ENCODE measurements at regions of chr10 and their contacts with region 1.

Region 1: DNA sequence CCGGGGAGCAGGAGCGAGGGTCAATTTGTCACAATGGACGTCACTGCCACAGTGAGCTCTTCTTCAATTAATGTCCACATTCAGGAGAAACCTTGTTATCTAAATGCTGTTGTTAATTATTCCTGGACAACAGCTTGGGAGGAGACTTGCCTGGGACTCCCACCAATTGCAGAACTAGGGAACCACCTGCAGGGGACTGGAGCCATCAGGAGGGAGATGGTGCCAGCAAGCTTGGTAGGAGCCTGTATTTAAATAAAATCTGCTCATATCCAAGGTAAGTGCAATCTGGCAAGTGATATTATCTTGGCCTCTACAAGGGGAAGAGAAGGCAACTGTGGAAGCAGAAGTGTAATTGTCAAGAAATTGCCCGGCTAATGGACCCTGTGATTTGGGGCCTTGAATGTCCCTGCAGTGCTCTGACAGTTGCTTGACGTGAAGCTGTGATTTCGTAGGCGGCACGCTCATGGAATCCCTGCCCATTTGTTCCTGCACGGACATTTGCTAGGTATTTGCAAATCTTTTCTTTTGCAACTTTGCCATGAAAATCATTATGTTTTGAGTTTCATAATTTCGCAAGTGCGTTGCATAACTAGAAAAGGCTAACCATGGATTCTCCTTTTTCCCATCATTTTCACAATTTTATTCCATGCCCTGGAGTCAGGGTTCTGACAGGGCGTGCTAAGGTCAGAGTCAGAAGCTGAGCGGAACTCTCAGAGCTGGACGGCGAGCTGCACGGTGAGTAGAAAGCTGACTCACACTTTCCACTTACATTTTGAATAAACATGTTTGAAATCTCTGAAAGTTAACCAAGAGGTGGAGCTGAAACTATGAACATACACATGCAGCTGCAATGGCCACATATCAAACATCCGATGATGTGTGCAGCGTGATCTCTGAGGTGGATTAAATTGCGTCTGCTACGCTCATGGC is 84.9 kb upstream of the TCERG1L start:
- DNase-seq: peak; percentile 44 to 78 (median 64)
- H3K4me3 ChIP-seq: no peak overlapping the region
- H3K27ac ChIP-seq: peak overlapping the region in 1 of 2 donors; percentile 27
- H3K4me1 ChIP-seq: peaks cover 3% of the 10 kb centered on the region
- H3K27me3 ChIP-seq: no peaks in the 10 kb centered on the region
- CTCF ChIP-seq: peak in 1 of 3 donors; percentile 12
- EP300 ChIP-seq: no peak
- POLR2A ChIP-seq: no peak

Region 2: DNA sequence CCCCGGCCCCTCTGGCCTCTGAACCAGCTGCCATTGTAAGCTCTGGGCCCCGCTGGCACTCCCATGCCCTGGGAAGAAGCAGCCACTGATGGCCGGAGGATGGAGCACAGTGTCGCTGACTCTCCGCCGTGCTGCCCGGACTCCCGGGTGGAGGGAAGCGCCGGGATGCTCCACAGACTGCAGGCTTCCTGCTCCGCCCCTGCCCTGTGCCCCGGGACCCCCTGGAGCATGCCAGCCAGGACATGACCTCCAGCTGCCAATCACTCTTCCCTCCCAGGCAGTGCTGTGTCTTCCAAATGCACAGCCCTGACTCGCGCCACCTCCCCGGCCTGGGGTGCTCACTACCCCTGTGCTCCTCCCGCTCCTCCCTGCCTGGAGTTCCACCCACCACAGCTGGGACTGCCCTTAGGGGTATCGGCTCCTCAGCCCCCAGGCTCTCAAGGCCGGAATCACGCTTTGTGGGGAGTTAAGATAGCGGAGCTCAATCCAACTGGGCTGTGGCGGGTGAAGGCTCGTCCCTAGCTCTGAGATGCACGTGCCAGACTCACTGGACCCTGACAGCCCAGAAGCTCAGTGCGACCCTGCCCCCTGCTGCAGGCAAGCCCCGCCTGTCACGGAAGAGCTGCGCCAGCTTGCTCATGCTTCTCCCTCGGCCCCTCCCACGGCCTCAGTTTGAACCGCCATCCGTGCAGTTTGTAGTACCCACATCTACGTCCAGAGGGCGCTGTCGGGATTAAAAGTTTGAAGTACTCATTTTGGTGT is 57.4 kb after region 1 on chr10:
- intact Hi-C with region 1: loop called in 1 of 4 experiments (anchors 10 kb)
- DNase-seq: peak; percentile 84 to 92 (median 92)
- H3K4me3 ChIP-seq: no peak overlapping the region
- H3K27ac ChIP-seq: peak overlapping the region; percentile 72 to 75
- H3K4me1 ChIP-seq: peaks cover 8% of the 10 kb centered on the region
- H3K27me3 ChIP-seq: no peaks in the 10 kb centered on the region
- CTCF ChIP-seq: peak; percentile 76 to 85 (median 81)
- EP300 ChIP-seq: no peak
- POLR2A ChIP-seq: no peak